ENCODE measurements at regions of chr2 and their contacts with region 1.

Region 1: DNA sequence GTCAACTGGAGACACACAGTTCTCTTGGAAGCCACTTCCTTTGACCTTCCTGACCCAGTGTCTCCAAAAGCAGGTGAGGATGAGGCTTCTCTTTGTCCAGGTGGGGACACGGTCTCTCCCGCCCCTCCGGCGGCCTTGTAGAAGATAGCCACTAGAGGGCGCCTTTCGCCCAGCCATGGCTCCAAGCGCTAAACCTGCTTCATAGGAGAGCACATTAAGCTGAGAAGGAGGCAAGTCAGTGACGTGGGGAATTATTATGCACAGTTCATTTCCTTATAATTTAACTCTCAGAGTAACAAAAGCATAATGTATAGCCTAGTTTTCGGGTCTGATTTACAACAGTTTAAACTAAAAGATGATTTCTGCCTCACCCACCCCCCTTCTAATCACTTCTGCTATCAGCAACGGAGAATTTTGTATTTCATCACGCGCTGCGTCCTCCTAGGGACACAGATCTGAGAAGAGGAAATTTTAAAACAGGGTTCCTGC is 208.7 kb downstream of the ICOS start:
- DNase-seq: peak; percentile 63
- ATAC-seq: peak; percentile 99
- H3K4me3 ChIP-seq: peak overlapping the region; percentile 14; the same call in 1 of the 2 replicates
- H3K27ac ChIP-seq: no peak overlapping the region
- H3K4me1 ChIP-seq: no peaks in the 10 kb centered on the region
- H3K27me3 ChIP-seq: peaks cover 21% of the 10 kb centered on the region
- CTCF ChIP-seq: peak; percentile 86
- POLR2A ChIP-seq: no peak
- RAD21 ChIP-seq: peak; percentile 91

Region 2: GRCh38 chr2:205925373-205926337 is 1780.3 kb after region 1 on chr2:
- CTCF ChIA-PET with region 1: no interaction called
- POLR2A ChIA-PET with region 1: no interaction called
- dilution Hi-C with region 1: no loop called
- in situ Hi-C with region 1: no loop called
- intact Hi-C with region 1: loop called (anchors 2 kb)
- DNase-seq: peak; percentile 51
- ATAC-seq: peak; percentile 97
- H3K4me3 ChIP-seq: peak overlapping the region; percentile 12; the same call in 1 of the 2 replicates
- H3K27ac ChIP-seq: no peak overlapping the region
- H3K4me1 ChIP-seq: no peaks in the 10 kb centered on the region; the same call in 1 of the 2 replicates
- H3K27me3 ChIP-seq: peaks cover 42% of the 10 kb centered on the region
- CTCF ChIP-seq: peak; percentile 91
- POLR2A ChIP-seq: no peak
- RAD21 ChIP-seq: peak; percentile 93